ENCODE measurements at regions of chr13 and their contacts with region 1.

Region 1: GRCh38 chr13:98672944-98673545 is 79.4 kb downstream of the SLC15A1 start:
- DNase-seq: peak; percentile 23
- H3K4me3 Mint-ChIP-seq: no peak overlapping the region
- H3K27ac Mint-ChIP-seq: no peak overlapping the region
- H3K4me1 Mint-ChIP-seq: no peaks in the 10 kb centered on the region
- H3K27me3 Mint-ChIP-seq: peaks cover 14% of the 10 kb centered on the region

Region 2: GRCh38 chr13:97477844-97478243 is 1195.2 kb before region 1 on chr13:
- intact Hi-C with region 1: no loop called
- DNase-seq: no peak
- H3K4me3 Mint-ChIP-seq: no peak overlapping the region
- H3K27ac Mint-ChIP-seq: no peak overlapping the region
- H3K4me1 Mint-ChIP-seq: no peaks in the 10 kb centered on the region
- H3K27me3 Mint-ChIP-seq: peaks cover 3% of the 10 kb centered on the region

Region 3: DNA sequence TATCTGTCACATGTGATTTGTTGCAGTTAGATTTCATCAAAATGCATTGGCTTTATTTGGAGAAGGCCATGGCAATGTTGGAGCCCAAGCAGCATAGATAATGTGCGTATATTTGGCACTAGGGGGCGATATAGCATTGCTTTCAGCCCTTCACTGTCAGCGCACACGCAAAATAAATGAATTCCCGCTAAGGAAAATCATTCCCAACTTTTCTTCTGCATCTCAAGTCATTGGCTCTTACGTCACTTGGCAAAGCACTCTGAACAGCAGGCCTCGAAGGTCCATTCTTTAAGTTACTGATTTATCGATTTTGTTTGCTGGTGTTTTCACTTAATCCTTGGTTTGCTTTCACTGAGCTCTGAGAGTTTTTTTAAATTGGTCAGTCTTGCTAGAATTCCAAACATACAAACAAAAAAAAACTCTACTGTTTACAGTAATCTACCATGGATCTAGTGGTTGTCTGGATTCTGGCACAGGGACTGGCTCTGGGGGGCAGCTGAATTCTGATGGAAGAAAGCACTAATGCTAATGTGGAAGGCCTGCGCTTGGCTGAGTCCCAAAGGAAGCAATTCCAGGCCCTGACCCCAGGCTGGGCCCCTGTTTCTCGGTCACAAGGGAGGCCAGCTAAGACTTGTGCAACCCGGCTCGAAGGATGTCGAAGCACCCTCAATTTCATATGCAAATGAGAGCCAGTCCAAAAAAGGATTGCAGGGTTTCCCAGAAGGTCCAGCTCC is 817.3 kb before region 1 on chr13:
- intact Hi-C with region 1: loop called (anchors 5 kb)
- DNase-seq: no peak
- H3K4me3 Mint-ChIP-seq: no peak overlapping the region
- H3K27ac Mint-ChIP-seq: no peak overlapping the region
- H3K4me1 Mint-ChIP-seq: peaks cover 3% of the 10 kb centered on the region
- H3K27me3 Mint-ChIP-seq: no peaks in the 10 kb centered on the region

Measured in activated T-helper 2 cell treated with anti-CD3 and anti-CD28 coated beads, Interferon-gamma antibody, Interleukin-2, Interleukin-4, amounts not matched to agents 10 μg/mL and 5 μg/mL and 100 μg/mL, durations not matched to agents 14 hours and 24 hours and 36 hours (primary cell).